Left cardiac atrium (tissue), 4 donors: ENCODE measurements at regions of chr10 and their contacts with region 1.

Region 1: DNA sequence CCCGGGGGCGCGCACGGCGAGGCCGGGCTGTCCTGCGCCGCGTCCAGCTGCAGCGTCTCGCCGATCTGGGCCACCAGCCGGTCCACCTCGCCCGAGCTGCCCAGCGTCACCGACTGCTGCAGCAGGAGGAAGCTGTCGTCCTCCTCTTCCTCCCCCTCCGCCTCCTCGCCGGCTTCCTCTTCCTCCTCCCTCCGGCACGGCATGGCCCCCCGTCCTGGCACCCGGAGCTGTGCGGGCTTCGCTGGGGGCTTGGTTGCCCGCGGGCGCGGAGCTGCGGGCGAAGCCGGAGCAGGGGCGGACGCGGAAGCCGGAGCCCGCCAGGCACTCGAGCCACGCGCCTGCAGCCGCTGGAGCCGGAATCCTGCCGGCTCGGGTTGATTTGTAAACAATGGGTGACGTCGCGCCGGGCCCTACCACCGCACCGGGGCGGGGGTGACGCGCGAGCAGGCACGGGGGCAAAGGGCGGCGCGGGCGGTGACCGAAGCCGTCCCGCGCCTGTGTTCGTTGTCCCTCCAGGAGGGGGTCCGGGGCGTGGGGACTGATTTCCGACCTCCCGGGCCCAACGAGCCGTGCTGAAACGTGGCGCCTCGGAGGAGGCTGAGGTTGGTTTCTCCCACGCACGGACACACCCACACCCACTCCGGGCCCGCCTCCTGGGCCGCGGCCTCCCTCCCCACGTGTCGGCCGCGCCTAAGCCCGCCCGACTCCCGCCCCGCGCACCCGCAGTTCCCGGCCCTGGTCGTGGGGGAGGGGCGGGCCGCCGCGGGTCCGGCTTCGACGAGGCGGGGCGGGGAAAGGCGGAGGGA is at the start of gene FRAT2:
- DNase-seq: peak; percentile 91
- ATAC-seq: peak; percentile 97
- total RNA-seq, gene FRAT2: 4.9 to 7.6 TPM

Region 2: GRCh38 chr10:97222326-97222961 is 112.1 kb before region 1 on chr10:
- intact Hi-C with region 1: no loop called
- DNase-seq: no peak
- ATAC-seq: no peak

Region 3: GRCh38 chr10:97278491-97278989 is 56.0 kb before region 1 on chr10:
- intact Hi-C with region 1: loop called (anchors 2 to 10 kb)
- DNase-seq: no peak
- ATAC-seq: peak; percentile 92 to 93

Region 4: DNA sequence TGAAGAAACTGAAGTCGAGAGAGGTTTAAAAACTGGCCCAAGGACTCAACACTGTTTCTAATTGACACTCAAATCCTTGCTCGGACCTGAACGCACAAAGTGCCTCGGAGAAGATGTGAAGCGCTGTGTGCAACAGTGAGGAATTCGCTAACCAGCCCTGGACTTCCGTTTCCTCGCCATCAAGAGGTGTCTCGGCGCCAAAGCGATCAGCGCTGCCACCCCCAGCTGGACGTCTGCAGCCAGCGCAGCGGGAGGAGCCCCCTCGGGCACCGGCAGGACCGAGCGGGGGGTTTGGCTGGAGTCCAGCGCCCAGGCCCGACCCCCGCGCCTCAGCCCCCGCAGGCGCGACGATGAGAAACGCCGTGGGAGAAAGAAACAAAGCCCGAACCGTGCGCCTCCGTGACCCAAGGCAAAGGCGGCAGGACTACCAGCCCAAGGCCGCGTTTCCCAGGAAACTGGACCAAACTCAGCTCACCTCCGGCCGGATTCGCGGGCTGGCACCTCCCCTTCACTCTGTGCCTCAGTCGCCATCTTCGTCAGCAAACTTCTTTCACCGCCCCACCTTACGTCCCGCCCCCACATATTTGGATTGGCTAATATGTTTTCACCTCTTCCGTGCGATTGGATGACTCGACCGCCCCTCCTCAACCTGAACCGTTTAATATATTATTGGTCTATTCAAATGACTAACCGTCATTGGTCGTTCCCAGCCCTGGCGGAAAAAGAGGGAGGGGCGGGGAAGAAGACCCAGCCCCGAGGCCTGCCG is 42.3 kb before region 1 on chr10 and contains the start of gene ARHGAP19:
- intact Hi-C with region 1: loop called (anchors 5 to 10 kb)
- DNase-seq: peak; percentile 95
- ATAC-seq: peak; percentile 99
- total RNA-seq, gene ARHGAP19: 4.4 to 7.6 TPM